ENCODE measurements at regions of chr1 and their contacts with region 1.

Region 1: GRCh38 chr1:26126321-26127084 is 14.9 kb downstream of the PDIK1L start:
- DNase-seq: peak; percentile 74
- CTCF ChIP-seq: no peak

Region 2: DNA sequence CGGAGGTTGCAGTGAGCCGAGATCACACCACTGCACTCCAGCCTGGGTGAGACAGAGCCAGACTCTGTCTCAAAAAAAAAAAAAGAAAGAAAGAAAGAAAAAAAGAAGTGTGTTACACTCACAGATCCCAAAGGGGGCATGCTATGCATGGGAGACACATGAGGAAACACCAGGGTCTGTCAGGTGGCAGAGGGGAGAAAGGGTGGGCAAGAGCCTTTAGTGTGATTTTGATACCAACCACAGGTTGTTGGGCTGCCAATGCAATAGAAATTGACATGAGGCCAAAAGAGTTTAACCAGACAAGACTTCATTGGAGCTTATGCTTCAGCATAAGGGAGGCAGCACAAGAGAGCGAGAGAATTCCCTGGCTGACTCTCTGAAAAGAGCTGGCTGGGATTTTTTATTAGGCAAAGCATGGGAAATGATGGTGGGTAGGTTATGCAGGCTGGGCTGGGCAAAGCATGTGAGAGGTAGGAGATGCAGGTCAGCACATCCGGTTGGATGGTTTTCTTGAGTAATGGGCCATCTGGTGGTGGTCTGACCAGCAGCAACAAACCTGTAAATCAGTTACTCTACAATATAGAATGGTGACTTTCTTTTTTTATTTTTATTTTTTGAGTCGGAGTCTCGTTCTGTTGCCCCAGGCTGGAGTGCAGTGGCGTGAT is 116.6 kb before region 1 on chr1:
- CTCF ChIA-PET with region 1: no interaction called
- POLR2A ChIA-PET with region 1: no interaction called
- DNase-seq: no peak
- CTCF ChIP-seq: no peak

Region 3: GRCh38 chr1:26111530-26112406 is 14.7 kb before region 1 on chr1 and contains the start of gene PDIK1L:
- CTCF ChIA-PET with region 1: interaction called, 12 read pairs
- POLR2A ChIA-PET with region 1: interaction called, 3 read pairs
- DNase-seq: peak; percentile 92
- CTCF ChIP-seq: no peak

Region 4: DNA sequence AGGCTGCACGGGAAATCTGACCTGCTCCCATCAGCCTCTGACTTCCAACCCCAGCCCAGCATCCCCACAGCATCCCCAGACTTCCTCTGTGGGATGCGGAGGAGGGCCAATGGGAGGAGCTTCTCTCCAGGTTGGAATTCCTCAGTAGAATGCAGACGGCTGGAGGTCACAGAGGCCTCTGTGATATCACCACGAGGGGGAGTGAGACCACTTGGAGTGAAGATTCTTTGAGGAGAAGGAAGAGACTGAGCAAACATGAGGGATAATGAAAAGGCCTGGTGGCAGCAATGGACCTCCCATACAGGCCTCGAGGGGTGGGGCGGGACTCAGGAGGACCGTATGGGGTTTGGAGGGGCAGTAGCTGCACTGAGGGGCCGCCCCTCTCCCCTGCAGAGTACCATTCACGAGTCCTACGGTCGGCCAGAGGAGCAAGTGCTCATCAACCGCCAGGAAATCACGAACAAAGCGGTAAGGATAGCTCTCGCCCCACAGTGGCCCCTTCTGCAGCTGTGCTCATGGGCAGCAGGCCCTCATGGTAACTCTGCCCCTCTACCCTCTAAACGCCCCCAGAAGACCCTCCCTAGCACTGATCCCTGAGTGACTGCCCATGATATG is 64.0 kb after region 1 on chr1 and contains the start of gene CATSPER4:
- CTCF ChIA-PET with region 1: no interaction called
- POLR2A ChIA-PET with region 1: no interaction called
- DNase-seq: peak; percentile 29
- CTCF ChIP-seq: peak; percentile 18

Measured in GM10248 (cell line).